PC-9 (cell line): ENCODE measurements at regions of chr15 and their contacts with region 1.

Region 1: GRCh38 chr15:101482526-101483371 is 6.8 kb downstream of the PCSK6 start:
- DNase-seq: peak; percentile 41 to 67
- H3K4me3 ChIP-seq: peak overlapping the region; percentile 21; the same call in 1 of the 2 replicates
- H3K27ac ChIP-seq: peak overlapping the region; percentile 72
- H3K4me1 ChIP-seq: peaks cover 57% of the 10 kb centered on the region
- H3K27me3 ChIP-seq: no peaks in the 10 kb centered on the region
- CTCF ChIP-seq: no peak

Region 2: DNA sequence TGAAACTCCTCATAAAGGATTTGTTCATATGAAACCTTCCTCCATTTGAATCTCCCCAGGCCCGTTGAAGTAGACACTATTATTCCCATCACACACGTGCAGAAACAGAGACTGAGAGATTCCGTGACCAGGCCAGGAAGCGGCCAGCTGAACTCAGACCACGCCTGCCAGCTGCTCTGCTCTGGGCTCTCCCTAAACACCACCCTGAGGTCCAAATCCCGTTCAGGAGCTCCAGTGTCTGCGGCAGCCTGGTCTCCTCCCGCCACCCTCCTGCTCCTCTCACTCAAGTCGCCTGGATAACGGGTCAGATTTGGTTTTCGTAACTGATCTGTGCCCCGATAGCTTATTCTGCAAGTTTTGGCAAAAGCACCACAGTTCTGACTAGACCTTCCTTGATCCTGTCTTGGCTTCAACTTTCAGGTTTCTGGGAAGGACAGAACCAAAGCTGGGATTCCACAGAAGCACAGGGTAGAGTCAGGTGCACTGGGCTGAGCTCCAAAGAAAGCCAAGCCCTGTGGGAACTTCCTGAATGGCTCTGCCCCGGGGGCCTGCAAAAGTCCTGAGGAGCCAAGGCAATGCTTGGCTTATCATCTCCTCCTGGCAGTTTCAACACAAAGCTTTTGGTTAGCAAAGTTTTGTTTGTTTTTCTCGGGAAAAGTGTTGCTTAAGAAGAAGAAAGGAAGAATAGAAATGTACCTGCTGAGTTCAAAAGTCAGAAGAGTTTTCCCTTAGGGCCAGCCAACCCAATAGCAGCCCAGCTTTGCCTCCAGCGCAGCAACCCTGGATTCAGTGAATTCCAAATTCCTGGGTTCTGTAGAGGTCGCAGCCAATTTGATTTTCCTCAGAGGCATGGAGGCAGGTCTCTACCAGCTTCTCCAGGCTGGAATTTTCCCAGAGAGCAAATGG is 133.9 kb before region 1 on chr15:
- CTCF ChIA-PET with region 1: no interaction called
- POLR2A ChIA-PET with region 1: no interaction called
- intact Hi-C with region 1: loop called (anchors 5 kb)
- DNase-seq: peak; percentile 82 to 83
- H3K4me3 ChIP-seq: no peak overlapping the region
- H3K27ac ChIP-seq: peak overlapping the region; percentile 75
- H3K4me1 ChIP-seq: peaks cover 26% of the 10 kb centered on the region
- H3K27me3 ChIP-seq: no peaks in the 10 kb centered on the region
- CTCF ChIP-seq: no peak

Region 3: DNA sequence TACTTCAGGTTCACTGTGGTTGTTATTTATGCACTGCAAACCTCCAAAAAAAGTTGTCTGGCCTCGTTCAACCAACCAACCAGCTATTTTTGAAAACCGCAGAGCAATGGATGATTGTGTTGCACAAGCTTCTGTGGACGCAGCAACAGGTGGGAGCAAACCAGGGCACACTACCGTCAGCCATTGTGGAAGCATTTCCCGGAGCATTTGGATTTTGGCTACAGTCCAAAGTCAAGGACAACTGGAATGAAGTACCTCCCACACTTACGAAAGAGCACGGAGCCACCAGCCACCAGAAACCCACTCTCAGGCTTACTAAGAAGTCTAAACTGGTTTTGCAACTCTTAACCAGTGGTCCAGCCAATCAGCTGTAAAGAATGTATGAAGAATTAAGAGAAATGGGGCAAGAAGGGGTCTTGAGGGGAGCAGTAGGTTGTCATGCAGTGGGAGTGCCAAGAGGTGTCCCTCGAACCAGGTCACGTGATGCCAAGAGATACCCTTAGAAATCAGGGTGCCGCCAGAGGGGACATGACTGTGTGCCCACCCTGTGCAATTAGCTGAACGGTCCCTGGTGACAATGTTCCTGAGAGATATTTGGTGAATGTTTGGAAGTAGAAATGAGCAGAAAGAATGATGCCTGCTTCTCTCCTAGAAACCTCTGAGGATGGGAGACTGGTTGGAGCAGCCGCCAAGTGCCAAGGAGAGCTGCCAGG is 75.6 kb after region 1 on chr15:
- CTCF ChIA-PET with region 1: no interaction called
- POLR2A ChIA-PET with region 1: no interaction called
- intact Hi-C with region 1: loop called (anchors 5 kb)
- DNase-seq: peak; percentile 69 to 88
- H3K4me3 ChIP-seq: peak overlapping the region; percentile 16; the same call in 1 of the 2 replicates
- H3K27ac ChIP-seq: peak overlapping the region; percentile 48
- H3K4me1 ChIP-seq: peaks cover 56% of the 10 kb centered on the region
- H3K27me3 ChIP-seq: no peaks in the 10 kb centered on the region
- CTCF ChIP-seq: no peak

Region 4: GRCh38 chr15:101641166-101641764 is 158.5 kb after region 1 on chr15:
- CTCF ChIA-PET with region 1: no interaction called
- POLR2A ChIA-PET with region 1: no interaction called
- intact Hi-C with region 1: loop called (anchors 5 kb)
- DNase-seq: peak; percentile 73 to 74
- H3K4me3 ChIP-seq: no peak overlapping the region
- H3K27ac ChIP-seq: no peak overlapping the region
- H3K4me1 ChIP-seq: peaks cover 30% of the 10 kb centered on the region
- H3K27me3 ChIP-seq: no peaks in the 10 kb centered on the region
- CTCF ChIP-seq: peak; percentile 98

Region 5: DNA sequence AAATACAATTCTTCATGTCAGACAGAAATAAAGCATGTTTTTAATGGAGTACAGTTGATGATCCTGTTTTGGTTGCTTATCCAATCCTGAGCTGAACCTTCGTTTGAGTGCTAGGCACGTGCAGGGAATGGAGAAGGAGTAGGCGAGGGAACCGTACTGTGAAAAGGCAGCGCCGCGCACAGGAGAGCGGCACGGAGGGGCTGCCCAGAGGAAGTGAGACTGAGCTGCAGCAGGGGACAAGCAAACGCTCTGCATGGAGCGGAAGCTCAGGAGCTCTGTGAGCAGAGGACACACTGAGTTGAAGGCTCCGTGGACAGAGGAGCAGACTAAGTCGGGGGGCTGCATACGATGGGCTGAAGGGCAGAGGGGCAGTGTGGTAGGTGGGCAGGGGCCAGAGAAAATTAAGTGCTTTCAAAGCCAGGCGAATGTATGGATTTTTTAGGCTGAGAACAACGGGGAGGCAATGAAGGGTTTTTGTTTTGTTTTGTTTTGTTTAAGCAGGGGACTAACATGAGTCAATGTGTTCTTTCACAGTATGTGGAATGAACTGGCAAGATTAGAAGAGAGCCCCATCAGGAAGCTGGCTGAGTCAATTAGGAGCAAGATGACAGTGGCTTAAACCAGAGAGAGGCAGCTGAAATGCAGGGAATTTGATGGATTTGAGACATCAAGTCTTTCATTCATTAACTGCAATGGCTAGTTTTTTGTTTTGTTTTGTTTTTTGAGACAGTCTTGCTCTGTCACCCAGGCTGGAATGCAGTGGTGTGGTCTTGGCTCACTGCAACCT is 193.2 kb after region 1 on chr15:
- CTCF ChIA-PET with region 1: no interaction called
- POLR2A ChIA-PET with region 1: no interaction called
- intact Hi-C with region 1: no loop called
- DNase-seq: no peak
- H3K4me3 ChIP-seq: no peak overlapping the region
- H3K27ac ChIP-seq: no peak overlapping the region
- H3K4me1 ChIP-seq: no peaks in the 10 kb centered on the region
- H3K27me3 ChIP-seq: no peaks in the 10 kb centered on the region
- CTCF ChIP-seq: no peak